Heart left ventricle (tissue), 16 donors: ENCODE measurements at regions of chr7 and their contacts with region 1.

Region 1: DNA sequence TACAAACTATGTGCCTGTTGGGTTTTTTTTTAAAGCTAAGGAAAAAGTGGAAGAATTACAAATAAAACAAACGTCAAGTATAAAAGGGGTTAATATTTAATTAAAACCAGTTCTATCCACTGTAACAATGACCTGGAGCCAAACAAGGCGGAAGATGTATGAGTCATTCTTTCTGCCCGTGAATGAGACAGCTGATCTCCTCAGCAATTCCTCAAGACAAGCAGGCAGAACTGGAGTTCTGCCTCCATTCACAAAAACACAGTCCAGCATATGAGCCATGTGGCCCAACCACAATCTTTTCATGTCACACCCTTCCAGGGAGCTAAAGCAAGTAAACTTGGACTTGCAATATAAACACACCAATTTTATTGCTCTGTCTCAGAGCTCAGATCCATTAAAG is 8.4 kb downstream of the ETV1 start:
- DNase-seq: peak in 4 of 5 donors; percentile 43 to 66 (median 62)
- ATAC-seq: peak; percentile 83 to 96 (median 96)
- H3K4me3 ChIP-seq: peak overlapping the region in 7 of 12 donors; percentile 1 to 26 (median 11)
- H3K27ac ChIP-seq: peak overlapping the region in 8 of 12 donors; percentile 1 to 59 (median 39)
- H3K4me1 ChIP-seq: peaks cover 0 to 71% (median 31%) of the 10 kb centered on the region in 12 donors
- H3K27me3 ChIP-seq: no peaks in the 10 kb centered on the region
- CTCF ChIP-seq: no peak
- POLR2A ChIP-seq: no peak

Region 2: GRCh38 chr7:13933091-13933490 is 48.0 kb before region 1 on chr7:
- intact Hi-C with region 1: loop called in 1 of 10 experiments (anchors 5 kb)
- DNase-seq: no peak
- ATAC-seq: no peak
- H3K4me3 ChIP-seq: peak overlapping the region in 1 of 12 donors; percentile 1
- H3K27ac ChIP-seq: peak overlapping the region in 1 of 12 donors; percentile 3
- H3K4me1 ChIP-seq: peaks cover 0 to 6% (median 0%) of the 10 kb centered on the region in 12 donors
- H3K27me3 ChIP-seq: no peaks in the 10 kb centered on the region
- CTCF ChIP-seq: no peak
- POLR2A ChIP-seq: no peak

Region 3: DNA sequence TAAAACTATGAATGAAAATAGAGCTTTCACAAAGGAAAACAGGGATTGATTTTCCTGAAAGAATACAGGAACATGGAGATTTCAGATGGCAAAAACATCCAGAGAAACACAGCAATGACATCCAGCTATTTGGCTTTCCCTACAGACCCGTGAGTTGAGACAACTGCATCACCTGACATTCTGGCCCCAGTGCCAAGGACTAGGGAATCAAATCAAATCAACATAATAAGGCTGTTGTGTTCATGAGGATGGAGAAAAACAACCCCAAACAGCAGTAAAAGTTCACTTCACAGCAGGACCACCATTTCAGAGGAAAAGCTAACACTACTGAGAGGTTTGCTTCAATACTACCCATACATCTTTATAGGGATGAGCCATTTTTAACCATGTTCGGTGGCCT is 17.1 kb before region 1 on chr7:
- intact Hi-C with region 1: loop called in 1 of 10 experiments (anchors 2 kb)
- DNase-seq: no peak
- ATAC-seq: no peak
- H3K4me3 ChIP-seq: no peak overlapping the region
- H3K27ac ChIP-seq: no peak overlapping the region
- H3K4me1 ChIP-seq: peaks cover 0 to 3% (median 0%) of the 10 kb centered on the region in 12 donors
- H3K27me3 ChIP-seq: no peaks in the 10 kb centered on the region
- CTCF ChIP-seq: no peak
- POLR2A ChIP-seq: no peak

Region 4: DNA sequence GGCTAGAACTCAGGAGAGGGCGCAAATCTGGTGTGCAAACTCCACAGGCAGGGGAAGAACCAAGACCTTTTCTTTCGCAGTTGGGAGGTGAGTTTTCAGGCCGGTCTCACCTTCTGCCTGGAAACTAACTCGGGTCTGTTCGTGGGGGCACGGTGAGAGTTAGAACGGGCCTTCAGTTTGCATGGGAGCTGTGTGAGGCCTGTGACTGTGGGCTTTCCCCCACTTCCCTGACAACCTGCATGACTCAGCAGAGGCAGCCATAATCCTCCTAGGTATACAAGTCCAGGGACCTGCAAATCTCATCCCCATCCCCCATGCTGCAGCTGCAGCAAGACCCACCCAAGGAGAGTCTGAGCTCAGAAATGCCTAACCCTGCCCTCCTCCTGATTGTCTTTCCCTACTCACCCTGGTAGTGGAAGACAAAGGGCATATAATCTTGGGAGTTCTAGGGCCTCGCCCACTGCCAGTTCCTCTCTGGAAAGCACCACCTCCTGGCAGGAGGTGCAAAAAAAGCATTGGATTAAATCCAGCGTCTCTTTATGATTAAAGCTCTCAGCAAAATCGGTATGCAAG is 203.3 kb after region 1 on chr7:
- intact Hi-C with region 1: no loop called
- DNase-seq: no peak
- ATAC-seq: no peak
- H3K4me3 ChIP-seq: no peak overlapping the region
- H3K27ac ChIP-seq: no peak overlapping the region
- H3K4me1 ChIP-seq: no peaks in the 10 kb centered on the region
- H3K27me3 ChIP-seq: no peaks in the 10 kb centered on the region
- CTCF ChIP-seq: no peak
- POLR2A ChIP-seq: no peak